B cell (primary cell): ENCODE measurements at regions of chr1 and their contacts with region 1.

Region 1: DNA sequence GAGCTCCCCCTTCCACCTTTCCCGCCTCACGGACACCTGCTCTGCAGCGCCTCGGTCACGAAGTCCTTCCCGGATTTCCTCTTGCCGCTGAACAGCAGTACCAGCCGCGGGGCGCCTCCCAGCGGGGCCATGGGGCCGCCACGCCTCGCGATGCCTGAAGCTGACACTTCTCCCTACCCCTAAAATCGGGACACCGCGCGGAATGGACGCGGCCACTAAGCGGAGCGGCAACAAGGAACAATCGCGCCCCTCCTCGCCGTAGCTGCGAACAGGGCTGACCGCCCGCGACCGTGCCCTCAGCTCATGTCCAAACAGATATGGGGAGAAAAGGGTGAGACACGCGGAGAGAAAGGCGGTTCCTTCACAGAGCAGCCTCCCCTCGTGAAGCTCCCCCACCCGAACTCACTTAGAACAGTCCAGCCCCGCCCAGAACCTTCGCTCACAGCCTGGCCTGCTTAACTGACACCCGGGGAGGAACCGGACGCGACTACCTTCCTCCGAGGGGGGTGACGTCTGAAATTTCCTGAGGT is at the start of gene PMVK:
- DNase-seq: peak; percentile 99
- ATAC-seq: peak; percentile 89
- H3K4me3 ChIP-seq: peak within 1 kb of the TSS; percentile 76 to 90 (median 80)
- H3K4me3 Mint-ChIP-seq: peak within 1 kb of the TSS; percentile 97
- H3K27ac ChIP-seq: peak within 1 kb of the TSS; percentile 98
- H3K27ac Mint-ChIP-seq: peak within 1 kb of the TSS; percentile 100
- H3K4me1 ChIP-seq: peaks cover 32 to 50% of the 10 kb centered on the region in 2 donors
- H3K4me1 Mint-ChIP-seq: peaks cover 51% of the 10 kb centered on the region
- H3K27me3 ChIP-seq: no peaks in the 10 kb centered on the region
- H3K27me3 Mint-ChIP-seq: no peaks in the 10 kb centered on the region
- CTCF ChIP-seq: peak; percentile 40
- total RNA-seq, gene PMVK: 15.0 TPM in 2 replicates

Region 2: DNA sequence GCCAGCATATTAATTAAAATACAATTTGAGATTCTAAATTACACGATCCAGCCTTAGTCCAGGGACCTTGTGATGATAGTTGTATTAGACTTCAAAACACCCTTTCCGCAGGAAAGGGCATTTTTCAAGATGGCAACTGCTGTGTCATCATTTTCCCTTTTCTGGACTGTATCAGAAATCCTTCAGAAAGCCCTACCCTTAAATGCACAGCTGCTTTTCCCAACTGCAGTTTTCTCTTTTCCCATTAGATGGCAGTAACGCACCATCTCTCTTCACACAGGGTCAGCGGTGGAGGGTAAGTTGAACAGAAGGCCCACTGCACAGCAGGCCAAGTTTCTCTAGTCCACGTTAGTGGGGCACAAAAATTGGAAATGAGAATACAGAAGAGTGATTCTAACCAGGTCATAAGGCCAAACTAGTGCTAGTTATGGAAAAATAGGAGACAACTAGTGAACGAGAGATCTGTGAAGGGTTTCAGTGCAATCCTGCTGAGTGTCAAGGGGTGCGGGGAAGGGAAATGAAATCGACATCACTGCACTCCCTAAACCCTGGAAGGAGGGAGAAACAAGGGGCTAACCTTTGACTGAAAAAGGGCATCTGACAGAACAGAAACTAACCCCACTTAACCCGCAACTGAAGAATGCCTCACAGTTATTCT is 456.7 kb before region 1 on chr1:
- CTCF ChIA-PET with region 1: interaction called, 10 read pairs
- POLR2A ChIA-PET with region 1: no interaction called
- intact Hi-C with region 1: no loop called
- DNase-seq: peak; percentile 82
- ATAC-seq: peak; percentile 89
- H3K4me3 ChIP-seq: no peak overlapping the region
- H3K4me3 Mint-ChIP-seq: no peak overlapping the region
- H3K27ac ChIP-seq: no peak overlapping the region
- H3K27ac Mint-ChIP-seq: no peak overlapping the region
- H3K4me1 ChIP-seq: no peaks in the 10 kb centered on the region
- H3K4me1 Mint-ChIP-seq: peaks cover 2% of the 10 kb centered on the region
- H3K27me3 ChIP-seq: no peaks in the 10 kb centered on the region
- H3K27me3 Mint-ChIP-seq: peaks cover 4% of the 10 kb centered on the region
- CTCF ChIP-seq: peak; percentile 99

Region 3: DNA sequence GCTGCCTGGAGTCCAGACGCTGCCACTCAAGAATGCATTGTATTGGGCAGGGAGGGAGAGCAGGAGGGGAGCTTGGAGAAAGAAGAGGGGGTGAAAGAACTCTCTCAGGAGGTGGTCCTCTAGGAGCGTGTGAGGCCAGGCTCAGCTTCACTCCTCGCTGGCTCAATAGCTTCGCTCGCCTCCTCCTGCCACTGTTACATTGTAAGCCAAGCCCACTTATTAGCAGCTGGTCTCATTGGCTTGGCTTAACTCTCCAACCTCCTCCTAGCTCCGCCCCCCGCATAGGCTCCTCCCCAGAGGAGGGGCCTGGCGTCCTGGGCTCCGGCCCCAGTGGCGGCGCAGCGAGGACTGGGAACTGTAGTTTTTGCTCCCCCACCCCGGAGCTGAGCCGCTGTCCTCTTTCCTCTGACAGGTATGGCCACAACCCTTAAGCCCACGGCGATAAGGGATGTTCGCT is 66.5 kb before region 1 on chr1 and contains the start of gene KCNN3:
- CTCF ChIA-PET with region 1: interaction called, 3 read pairs
- POLR2A ChIA-PET with region 1: interaction called, 3 read pairs
- intact Hi-C with region 1: loop called (anchors 5 kb)
- DNase-seq: peak; percentile 89
- ATAC-seq: peak; percentile 100
- H3K4me3 ChIP-seq: peak within 1 kb of the TSS in 1 of 5 experiments; percentile 21
- H3K4me3 Mint-ChIP-seq: peak within 1 kb of the TSS; percentile 71
- H3K27ac ChIP-seq: no peak within 1 kb of the TSS
- H3K27ac Mint-ChIP-seq: no peak within 1 kb of the TSS
- H3K4me1 ChIP-seq: peaks cover 35 to 42% of the 10 kb centered on the region in 2 donors
- H3K4me1 Mint-ChIP-seq: peaks cover 48% of the 10 kb centered on the region
- H3K27me3 ChIP-seq: peaks cover 0 to 34% (median 18%) of the 10 kb centered on the region in 4 experiments
- H3K27me3 Mint-ChIP-seq: peaks cover 43% of the 10 kb centered on the region
- CTCF ChIP-seq: no peak
- total RNA-seq, gene KCNN3: 0.17 and 0.29 TPM in 2 replicates

Region 4: GRCh38 chr1:154961497-154962262 is 25.1 kb after region 1 on chr1 and contains the start of gene PYGO2:
- CTCF ChIA-PET with region 1: interaction called, 13 read pairs
- POLR2A ChIA-PET with region 1: interaction called, 8 read pairs
- intact Hi-C with region 1: loop called (anchors 1 kb)
- DNase-seq: peak; percentile 93
- ATAC-seq: peak; percentile 86
- H3K4me3 ChIP-seq: peak within 1 kb of the TSS; percentile 62 to 91 (median 81)
- H3K4me3 Mint-ChIP-seq: peak within 1 kb of the TSS; percentile 91
- H3K27ac ChIP-seq: peak within 1 kb of the TSS; percentile 76 to 96
- H3K27ac Mint-ChIP-seq: peak within 1 kb of the TSS; percentile 94
- H3K4me1 ChIP-seq: peaks cover 22 to 35% of the 10 kb centered on the region in 2 donors
- H3K4me1 Mint-ChIP-seq: peaks cover 28% of the 10 kb centered on the region
- H3K27me3 ChIP-seq: no peaks in the 10 kb centered on the region
- H3K27me3 Mint-ChIP-seq: no peaks in the 10 kb centered on the region
- CTCF ChIP-seq: peak; percentile 82
- total RNA-seq, gene PYGO2: 47.5 and 52.7 TPM in 2 replicates

Region 5: DNA sequence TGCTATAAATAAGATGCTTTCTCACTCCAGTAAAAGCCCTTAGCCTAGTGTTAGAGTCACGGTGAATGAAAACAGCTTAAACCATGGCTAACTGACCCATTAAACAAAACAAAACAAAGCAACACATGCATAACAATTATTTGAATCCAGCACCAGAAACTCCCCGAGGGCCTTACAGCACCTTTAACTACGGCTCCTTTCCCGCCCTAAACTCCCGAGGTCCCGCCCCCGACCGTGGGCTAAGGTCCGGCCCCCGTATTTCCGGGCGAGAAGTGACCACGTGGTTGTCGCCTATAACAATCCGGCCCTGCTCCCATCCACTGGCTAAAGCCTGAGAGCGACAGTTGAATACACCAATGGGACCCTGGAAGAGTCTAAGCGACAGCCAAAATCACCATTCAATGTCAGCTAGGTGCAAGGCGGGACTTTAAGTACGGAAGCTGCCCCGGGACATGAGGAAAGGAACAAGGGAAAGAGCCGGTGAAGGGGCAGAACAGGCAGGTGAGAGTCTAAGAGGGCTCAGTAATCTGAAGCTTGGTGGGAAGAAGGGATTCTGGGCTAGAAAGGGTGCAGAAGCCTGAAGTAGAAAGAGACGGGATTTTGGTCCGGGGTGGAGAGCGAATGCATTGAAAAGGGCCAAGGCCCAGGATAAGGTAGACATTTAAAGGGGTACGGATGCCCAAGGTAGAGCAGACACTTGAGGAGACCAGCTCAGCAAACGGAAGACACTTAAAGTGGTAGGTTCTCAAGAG is 46.5 kb after region 1 on chr1 and contains the start of gene FLAD1:
- CTCF ChIA-PET with region 1: no interaction called
- POLR2A ChIA-PET with region 1: interaction called, 4 read pairs
- intact Hi-C with region 1: loop called (anchors 1 kb)
- DNase-seq: peak; percentile 98
- ATAC-seq: peak; percentile 99
- H3K4me3 ChIP-seq: peak within 1 kb of the TSS; percentile 58 to 93 (median 85)
- H3K4me3 Mint-ChIP-seq: no peak within 1 kb of the TSS
- H3K27ac ChIP-seq: peak within 1 kb of the TSS; percentile 30 to 84
- H3K27ac Mint-ChIP-seq: peak within 1 kb of the TSS; percentile 50
- H3K4me1 ChIP-seq: peaks cover 13 to 19% of the 10 kb centered on the region in 2 donors
- H3K4me1 Mint-ChIP-seq: peaks cover 11% of the 10 kb centered on the region
- H3K27me3 ChIP-seq: no peaks in the 10 kb centered on the region
- H3K27me3 Mint-ChIP-seq: no peaks in the 10 kb centered on the region
- CTCF ChIP-seq: no peak
- total RNA-seq, gene FLAD1: 49.6 and 51.4 TPM in 2 replicates

Region 6: GRCh38 chr1:155017041-155017945 is 80.7 kb after region 1 on chr1:
- CTCF ChIA-PET with region 1: interaction called, 30 read pairs
- POLR2A ChIA-PET with region 1: interaction called, 5 read pairs
- intact Hi-C with region 1: loop called (anchors 1 kb)
- DNase-seq: peak; percentile 93
- ATAC-seq: peak; percentile 75
- H3K4me3 ChIP-seq: peak overlapping the region; percentile 9 to 68 (median 49)
- H3K4me3 Mint-ChIP-seq: peak overlapping the region; percentile 84
- H3K27ac ChIP-seq: peak overlapping the region; percentile 88 to 89
- H3K27ac Mint-ChIP-seq: peak overlapping the region; percentile 93
- H3K4me1 ChIP-seq: peaks cover 53 to 67% of the 10 kb centered on the region in 2 donors
- H3K4me1 Mint-ChIP-seq: peaks cover 69% of the 10 kb centered on the region
- H3K27me3 ChIP-seq: no peaks in the 10 kb centered on the region
- H3K27me3 Mint-ChIP-seq: no peaks in the 10 kb centered on the region
- CTCF ChIP-seq: peak; percentile 99